ENCODE measurements at regions of chr9 and their contacts with region 1.

Region 1: GRCh38 chr9:69190086-69190862 is 16.2 kb downstream of the TJP2 start:
- DNase-seq: no peak
- ATAC-seq: no peak

Region 2: GRCh38 chr9:68427216-68427977 is 762.9 kb before region 1 on chr9:
- intact Hi-C with region 1: no loop called
- DNase-seq: no peak
- ATAC-seq: peak; percentile 36

Region 3: GRCh38 chr9:68493958-68494577 is 696.2 kb before region 1 on chr9:
- intact Hi-C with region 1: no loop called
- DNase-seq: no peak
- ATAC-seq: peak; percentile 12

Region 4: DNA sequence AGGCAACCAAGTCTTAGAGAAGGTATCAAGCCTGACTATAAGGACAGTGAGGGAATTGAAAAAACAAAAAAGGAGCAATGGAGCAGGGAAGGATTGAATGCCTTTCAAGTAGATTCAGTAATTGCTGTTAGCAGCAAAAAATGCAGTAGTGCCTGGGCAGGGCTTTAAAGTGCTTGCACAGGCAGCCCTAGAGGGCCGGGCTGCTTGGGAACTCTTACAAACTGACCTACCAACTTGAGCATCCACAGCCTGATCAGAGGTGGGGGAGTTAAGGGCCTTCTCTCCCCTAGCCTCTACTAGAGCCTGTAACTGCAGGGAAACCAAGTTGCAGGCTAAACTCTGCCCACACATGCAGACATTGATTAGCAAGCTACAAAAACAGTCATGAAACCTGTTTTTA is 135.3 kb before region 1 on chr9:
- intact Hi-C with region 1: loop called (anchors 5 kb)
- DNase-seq: no peak
- ATAC-seq: no peak

Region 5: GRCh38 chr9:69657269-69657668 is 467.0 kb after region 1 on chr9:
- intact Hi-C with region 1: no loop called
- DNase-seq: no peak
- ATAC-seq: peak; percentile 56